Left cardiac atrium (tissue), 4 donors: ENCODE measurements at regions of chr13 and their contacts with region 1.

Region 1: GRCh38 chr13:29923554-29924481 is 73.4 kb upstream of the UBL3 start:
- DNase-seq: peak; percentile 83
- ATAC-seq: peak; percentile 78 to 91

Region 2: GRCh38 chr13:29418026-29418425 is 505.8 kb before region 1 on chr13:
- intact Hi-C with region 1: no loop called
- DNase-seq: no peak
- ATAC-seq: no peak

Region 3: GRCh38 chr13:29763436-29764180 is 160.2 kb before region 1 on chr13:
- intact Hi-C with region 1: loop called in 1 of 2 experiments (anchors 10 kb)
- DNase-seq: no peak
- ATAC-seq: no peak